Naive thymus-derived CD8-positive, alpha-beta T cell (primary cell): ENCODE measurements at regions of chr6 and their contacts with region 1.

Region 1: GRCh38 chr6:149046822-149047246 is 270.7 kb upstream of the TAB2 start:
- DNase-seq: peak in 3 of 10 donors; percentile 8 to 33 (median 10)
- ATAC-seq: peak in 1 of 2 donors; percentile 38
- H3K4me3 Mint-ChIP-seq: peak overlapping the region in 7 of 10 donors; percentile 25 to 59 (median 53)
- H3K27ac Mint-ChIP-seq: peak overlapping the region in 3 of 10 donors; percentile 9 to 84 (median 39)
- H3K4me1 Mint-ChIP-seq: peaks cover 5 to 38% (median 21%) of the 10 kb centered on the region in 4 donors
- H3K27me3 Mint-ChIP-seq: no peaks in the 10 kb centered on the region

Region 2: DNA sequence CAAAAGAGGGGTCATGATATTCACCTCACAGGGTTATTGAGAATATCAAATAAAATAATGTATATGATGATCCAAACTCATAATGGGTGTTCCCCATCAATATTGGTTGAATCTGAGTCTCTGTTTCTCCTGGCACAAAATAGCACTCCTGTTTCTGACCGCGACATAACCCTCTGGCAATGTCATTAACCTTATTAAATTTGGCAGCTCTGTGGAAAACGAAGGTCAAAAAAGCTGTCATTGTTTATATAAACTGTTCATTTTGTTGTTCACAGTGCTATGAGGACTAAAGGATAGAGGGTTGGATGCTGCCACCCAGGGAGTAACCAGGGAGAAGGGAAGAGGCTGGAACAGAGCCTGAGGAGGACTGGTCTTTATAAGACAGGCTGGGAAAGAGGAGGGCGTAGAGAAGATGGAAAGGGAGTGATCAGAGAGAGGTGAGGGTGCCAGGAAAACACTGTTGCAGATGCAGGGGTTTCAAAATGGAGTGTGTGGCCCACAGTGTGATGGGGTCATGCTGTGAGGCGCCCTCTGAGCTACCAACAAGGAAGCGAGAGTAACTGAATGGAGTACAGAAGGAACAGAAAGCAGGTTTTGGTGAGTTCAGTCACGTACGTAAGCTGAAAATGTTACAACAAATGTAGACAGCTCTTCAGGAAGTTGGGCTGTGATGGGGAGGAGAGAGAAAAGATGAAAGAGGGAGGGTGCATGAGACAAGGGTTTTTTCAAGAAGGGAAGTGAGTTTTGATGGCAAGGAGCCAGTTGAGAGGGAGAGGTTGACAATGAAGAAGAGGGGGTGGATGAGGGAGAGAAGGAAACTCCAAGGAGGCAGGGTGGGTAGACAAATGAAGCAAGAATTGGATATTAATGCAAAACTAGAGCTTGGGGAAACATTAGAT is 19.1 kb after region 1 on chr6:
- POLR2A ChIA-PET with region 1: interaction called, 10 read pairs
- DNase-seq: peak in 9 of 10 donors; percentile 46 to 90 (median 66)
- ATAC-seq: peak; percentile 97 to 98
- H3K4me3 Mint-ChIP-seq: peak overlapping the region; percentile 63 to 79 (median 71)
- H3K27ac Mint-ChIP-seq: peak overlapping the region; percentile 93 to 98 (median 97)
- H3K4me1 Mint-ChIP-seq: peaks cover 14 to 35% (median 26%) of the 10 kb centered on the region in 4 donors
- H3K27me3 Mint-ChIP-seq: no peaks in the 10 kb centered on the region